ENCODE measurements at regions of chr3 and their contacts with region 1.

Region 1: GRCh38 chr3:108602249-108602934 is 12.9 kb downstream of the DZIP3 start:
- DNase-seq: peak; percentile 48
- ATAC-seq: peak; percentile 74
- H3K4me3 Mint-ChIP-seq: peak overlapping the region; percentile 46
- H3K27ac Mint-ChIP-seq: peak overlapping the region; percentile 69
- H3K4me1 Mint-ChIP-seq: peaks cover 54% of the 10 kb centered on the region
- H3K27me3 Mint-ChIP-seq: no peaks in the 10 kb centered on the region

Region 2: GRCh38 chr3:108642526-108642925 is 40.1 kb after region 1 on chr3:
- CTCF ChIA-PET with region 1: interaction called, 3 read pairs
- POLR2A ChIA-PET with region 1: interaction called, 10 read pairs
- intact Hi-C with region 1: no loop called
- DNase-seq: no peak
- ATAC-seq: no peak
- H3K4me3 Mint-ChIP-seq: no peak overlapping the region
- H3K27ac Mint-ChIP-seq: no peak overlapping the region
- H3K4me1 Mint-ChIP-seq: no peaks in the 10 kb centered on the region
- H3K27me3 Mint-ChIP-seq: no peaks in the 10 kb centered on the region